Uterus (tissue), 4 donors: ENCODE measurements at regions of chr3 and their contacts with region 1.

Region 1: DNA sequence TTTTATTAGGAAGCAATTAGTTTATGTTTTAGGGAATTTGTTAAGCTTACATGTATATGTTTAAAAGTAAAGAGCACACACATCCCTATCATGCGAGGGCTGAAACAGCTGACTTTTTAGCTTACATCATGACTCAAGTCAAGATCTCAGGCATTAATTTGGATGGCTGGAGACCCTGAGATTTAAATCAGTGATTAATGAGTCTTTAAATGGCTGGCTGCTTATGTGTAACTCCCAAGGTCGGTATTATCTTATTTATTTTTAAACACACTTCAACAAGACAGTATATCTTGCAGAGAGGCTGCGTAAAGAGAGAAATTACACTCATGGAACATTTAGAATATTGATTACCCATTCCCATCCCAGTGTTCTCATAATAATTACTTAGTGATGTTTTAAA is 169.4 kb downstream of the KBTBD8 start:
- DNase-seq: no peak
- H3K4me3 ChIP-seq: no peak overlapping the region
- H3K27ac ChIP-seq: no peak overlapping the region
- H3K4me1 ChIP-seq: no peaks in the 10 kb centered on the region
- H3K27me3 ChIP-seq: no peaks in the 10 kb centered on the region
- CTCF ChIP-seq: no peak
- POLR2A ChIP-seq: no peak

Region 2: DNA sequence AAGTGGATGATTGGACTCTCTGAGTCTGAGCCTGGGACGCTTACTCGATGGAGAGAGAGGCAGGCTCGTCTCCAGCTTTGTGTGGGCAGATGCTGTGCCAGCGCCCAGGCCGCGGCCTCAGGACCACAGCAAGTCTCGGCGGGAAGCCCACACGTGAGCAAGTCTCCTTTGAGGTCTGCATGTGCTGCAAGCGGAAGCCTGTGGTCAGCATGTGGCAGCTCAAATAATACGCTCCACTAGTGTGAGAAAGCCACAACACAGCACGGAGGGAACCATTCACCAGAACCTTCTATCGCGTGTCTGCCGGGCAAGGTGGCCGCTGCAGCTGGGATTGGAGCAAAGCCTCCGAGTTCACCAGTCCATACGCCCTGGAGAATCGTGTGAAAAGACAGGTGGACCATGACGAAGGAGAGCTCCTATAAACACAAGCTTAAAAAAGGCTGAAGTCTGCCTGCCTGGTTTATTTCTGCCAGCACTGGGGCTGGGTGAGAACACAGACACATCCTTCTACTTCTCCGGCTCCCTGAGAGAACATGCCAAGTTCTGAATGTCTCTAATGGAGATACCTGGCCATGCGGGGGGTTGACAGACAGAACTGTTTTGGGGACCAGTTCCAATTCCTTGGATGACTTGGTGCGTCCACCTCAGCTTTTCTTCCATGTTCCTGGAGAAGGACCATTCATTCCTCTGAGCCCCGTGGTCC is 584.6 kb before region 1 on chr3:
- intact Hi-C with region 1: no loop called
- DNase-seq: no peak
- H3K4me3 ChIP-seq: no peak overlapping the region
- H3K27ac ChIP-seq: no peak overlapping the region
- H3K4me1 ChIP-seq: no peaks in the 10 kb centered on the region
- H3K27me3 ChIP-seq: no peaks in the 10 kb centered on the region
- CTCF ChIP-seq: no peak
- POLR2A ChIP-seq: no peak

Region 3: GRCh38 chr3:67154429-67154828 is 13.1 kb before region 1 on chr3:
- intact Hi-C with region 1: loop called (anchors 2 kb)
- DNase-seq: no peak
- H3K4me3 ChIP-seq: no peak overlapping the region
- H3K27ac ChIP-seq: no peak overlapping the region
- H3K4me1 ChIP-seq: no peaks in the 10 kb centered on the region
- H3K27me3 ChIP-seq: no peaks in the 10 kb centered on the region
- CTCF ChIP-seq: no peak
- POLR2A ChIP-seq: no peak